Left ventricle myocardium inferior (tissue), 1 donor: ENCODE measurements at regions of chr7 and their contacts with region 1.

Region 1: GRCh38 chr7:7103343-7104313 is 78.7 kb upstream of the C1GALT1 start:
- DNase-seq: no peak
- H3K4me3 ChIP-seq: peak overlapping the region; percentile 30
- H3K27ac ChIP-seq: no peak overlapping the region
- H3K4me1 ChIP-seq: peaks cover 24% of the 10 kb centered on the region
- H3K27me3 ChIP-seq: no peaks in the 10 kb centered on the region
- CTCF ChIP-seq: peak; percentile 76

Region 2: GRCh38 chr7:5872326-5872725 is 1231.3 kb before region 1 on chr7:
- intact Hi-C with region 1: no loop called
- DNase-seq: no peak
- H3K4me3 ChIP-seq: no peak overlapping the region
- H3K27ac ChIP-seq: no peak overlapping the region
- H3K4me1 ChIP-seq: no peaks in the 10 kb centered on the region
- H3K27me3 ChIP-seq: peaks cover 25% of the 10 kb centered on the region
- CTCF ChIP-seq: no peak

Region 3: DNA sequence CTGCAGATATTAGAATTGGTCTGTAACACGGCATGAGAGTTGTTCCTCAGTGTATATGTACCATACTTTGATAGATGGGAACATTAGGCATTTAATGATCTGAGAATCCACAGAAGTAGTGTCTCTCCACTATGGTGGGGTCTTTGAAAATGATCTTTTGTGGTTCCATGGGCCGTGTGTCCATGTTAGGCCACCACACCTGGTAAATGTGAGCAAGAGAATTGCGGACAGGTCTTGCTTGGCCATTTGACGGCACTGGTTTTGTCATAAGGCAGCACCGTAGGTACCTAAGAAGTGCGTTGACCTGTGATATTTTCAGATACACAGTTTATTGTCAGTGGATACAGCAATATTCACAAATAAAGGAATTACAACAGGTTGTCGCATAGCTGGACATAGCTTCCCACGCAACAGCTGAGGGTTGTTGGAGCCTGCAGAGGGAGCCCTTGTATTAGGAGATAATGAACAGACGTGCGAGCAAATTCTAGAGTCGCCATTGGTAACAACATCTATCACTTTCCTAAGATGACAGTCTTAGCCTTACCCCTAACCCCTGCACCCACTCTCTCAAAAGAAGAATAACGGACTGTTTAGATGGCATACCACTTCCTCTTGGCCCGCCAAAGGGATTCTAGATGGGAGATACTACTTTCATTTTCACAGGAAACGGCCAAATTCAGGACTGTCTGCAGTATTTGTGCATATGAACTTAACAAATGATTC is 320.7 kb after region 1 on chr7:
- intact Hi-C with region 1: loop called (anchors 10 kb)
- DNase-seq: peak; percentile 35
- H3K4me3 ChIP-seq: peak overlapping the region; percentile 63
- H3K27ac ChIP-seq: peak overlapping the region; percentile 34
- H3K4me1 ChIP-seq: peaks cover 3% of the 10 kb centered on the region
- H3K27me3 ChIP-seq: no peaks in the 10 kb centered on the region
- CTCF ChIP-seq: peak; percentile 85